Caco-2 (cell line): ENCODE measurements at regions of chr14 and their contacts with region 1.

Region 1: GRCh38 chr14:106013879-106014376 is 487.5 kb downstream of the TMEM121 start:
- DNase-seq: no peak
- H3K4me3 ChIP-seq: no peak overlapping the region
- H3K4me3 Mint-ChIP-seq: no peak overlapping the region
- H3K27ac Mint-ChIP-seq: no peak overlapping the region
- H3K4me1 ChIP-seq: no peaks in the 10 kb centered on the region
- H3K4me1 Mint-ChIP-seq: no peaks in the 10 kb centered on the region
- H3K27me3 ChIP-seq: no peaks in the 10 kb centered on the region
- H3K27me3 Mint-ChIP-seq: peaks cover 6% of the 10 kb centered on the region
- CTCF ChIP-seq: no peak

Region 2: DNA sequence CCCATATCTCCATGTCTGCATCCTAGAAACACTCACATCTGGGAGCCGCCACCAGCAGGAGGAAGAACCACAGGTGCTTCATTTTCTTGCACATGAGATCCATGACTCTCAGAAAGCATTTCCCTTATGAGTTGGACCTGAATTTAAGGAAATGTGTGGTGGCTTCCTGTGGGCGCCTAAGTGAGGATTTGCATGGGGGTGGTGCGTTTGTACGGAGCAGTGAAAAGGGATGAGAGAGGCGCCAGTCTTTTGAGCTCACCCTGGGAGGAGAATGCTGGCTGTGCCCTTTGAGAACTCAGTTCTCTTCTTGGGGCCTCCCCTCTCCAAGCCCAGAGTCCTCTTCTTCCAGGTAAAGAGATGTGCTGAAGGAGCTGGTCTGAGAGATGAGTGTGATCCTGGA is 408.1 kb after region 1 on chr14:
- CTCF ChIA-PET with region 1: interaction called, 13 read pairs
- POLR2A ChIA-PET with region 1: no interaction called
- intact Hi-C with region 1: no loop called
- DNase-seq: no peak
- H3K4me3 ChIP-seq: no peak overlapping the region
- H3K4me3 Mint-ChIP-seq: no peak overlapping the region
- H3K27ac Mint-ChIP-seq: no peak overlapping the region
- H3K4me1 ChIP-seq: no peaks in the 10 kb centered on the region
- H3K4me1 Mint-ChIP-seq: no peaks in the 10 kb centered on the region
- H3K27me3 ChIP-seq: no peaks in the 10 kb centered on the region
- H3K27me3 Mint-ChIP-seq: peaks cover 9% of the 10 kb centered on the region
- CTCF ChIP-seq: no peak